Vagina (tissue), 2 donors: ENCODE measurements at regions of chr9 and their contacts with region 1.

Region 1: GRCh38 chr9:6305954-6306563 is 22.1 kb upstream of the TPD52L3 start:
- DNase-seq: no peak
- H3K4me3 ChIP-seq: no peak overlapping the region
- H3K27ac ChIP-seq: no peak overlapping the region
- H3K4me1 ChIP-seq: no peaks in the 10 kb centered on the region
- H3K27me3 ChIP-seq: no peaks in the 10 kb centered on the region
- CTCF ChIP-seq: peak in 2 of 3 experiments; percentile 55 to 70
- POLR2A ChIP-seq: no peak

Region 2: DNA sequence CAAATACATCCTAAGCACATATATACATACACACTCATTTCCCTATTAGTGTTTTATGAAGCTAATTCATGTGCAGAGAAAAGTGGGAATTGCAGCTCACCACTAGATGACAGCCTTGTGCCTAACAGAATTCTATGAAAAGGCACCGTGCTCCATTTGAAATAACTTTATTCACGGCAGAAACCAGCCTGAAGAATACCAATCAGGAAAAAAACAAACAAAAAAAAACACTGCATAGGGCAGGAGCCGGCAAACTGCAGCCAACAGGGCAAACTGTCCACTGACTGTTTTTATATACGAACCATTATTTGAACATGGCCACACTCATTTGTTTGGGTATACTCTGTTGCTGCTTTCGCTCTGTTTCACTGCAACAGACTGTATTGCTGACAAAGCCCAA is 506.7 kb before region 1 on chr9:
- intact Hi-C with region 1: no loop called
- DNase-seq: no peak
- H3K4me3 ChIP-seq: no peak overlapping the region
- H3K27ac ChIP-seq: no peak overlapping the region
- H3K4me1 ChIP-seq: no peaks in the 10 kb centered on the region
- H3K27me3 ChIP-seq: no peaks in the 10 kb centered on the region
- CTCF ChIP-seq: peak in 1 of 3 experiments; percentile 28
- POLR2A ChIP-seq: no peak

Region 3: DNA sequence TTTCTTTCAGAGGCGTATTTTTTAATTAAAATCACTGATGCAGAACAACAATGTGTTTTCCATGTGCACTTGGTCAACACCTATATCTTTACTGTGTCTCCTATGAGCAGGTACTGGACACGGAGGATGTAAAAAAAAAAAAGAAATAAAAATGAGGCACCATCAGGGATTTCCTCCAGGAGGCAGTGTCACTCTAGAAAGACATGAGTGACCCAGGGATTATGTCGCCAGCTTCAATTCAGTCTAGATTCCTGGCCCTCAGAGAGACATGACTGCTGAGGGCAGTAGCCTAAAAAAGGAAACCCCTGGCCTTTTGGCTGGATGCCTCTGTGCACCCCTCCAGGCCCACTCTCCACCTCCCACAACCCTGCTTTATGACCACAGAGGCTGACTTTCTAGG is 108.7 kb before region 1 on chr9:
- intact Hi-C with region 1: loop called (anchors 5 kb)
- DNase-seq: no peak
- H3K4me3 ChIP-seq: no peak overlapping the region
- H3K27ac ChIP-seq: peak overlapping the region; percentile 39
- H3K4me1 ChIP-seq: no peaks in the 10 kb centered on the region
- H3K27me3 ChIP-seq: no peaks in the 10 kb centered on the region
- CTCF ChIP-seq: peak in 1 of 3 experiments; percentile 40
- POLR2A ChIP-seq: no peak